ENCODE measurements at regions of chr10 and their contacts with region 1.

Region 1: GRCh38 chr10:117431160-117431559 is 55.9 kb upstream of the PDZD8 start:
- DNase-seq: peak; percentile 17
- H3K4me3 ChIP-seq: no peak overlapping the region
- CTCF ChIP-seq: peak; percentile 54

Region 2: GRCh38 chr10:117442944-117443685 is 12.0 kb after region 1 on chr10:
- CTCF ChIA-PET with region 1: interaction called, 50 read pairs
- POLR2A ChIA-PET with region 1: no interaction called
- DNase-seq: no peak
- H3K4me3 ChIP-seq: peak overlapping the region; percentile 27
- CTCF ChIP-seq: peak; percentile 95

Region 3: DNA sequence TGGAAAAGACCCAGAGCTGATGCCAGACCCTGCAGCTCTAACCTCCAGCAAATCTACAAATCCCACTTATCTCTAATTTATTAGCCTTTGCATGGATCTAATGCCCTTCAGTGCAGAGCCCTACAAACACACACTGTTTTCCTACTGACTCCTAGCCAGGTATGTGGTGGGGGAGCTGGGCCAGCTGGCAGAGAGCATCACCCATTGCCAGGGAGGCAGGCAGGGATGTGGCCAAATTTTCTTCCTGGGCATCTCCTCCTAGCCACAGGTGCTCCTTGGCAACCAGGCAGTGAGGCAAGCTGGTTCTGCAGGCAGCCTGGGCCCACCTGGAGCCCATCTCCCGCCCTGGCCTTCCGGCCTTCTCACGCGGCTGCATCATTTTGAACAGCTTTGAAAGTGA is 55.4 kb after region 1 on chr10:
- CTCF ChIA-PET with region 1: interaction called, 13 read pairs
- POLR2A ChIA-PET with region 1: no interaction called
- DNase-seq: no peak
- H3K4me3 ChIP-seq: no peak overlapping the region
- CTCF ChIP-seq: no peak

Region 4: GRCh38 chr10:118241229-118242137 is 810.3 kb after region 1 on chr10:
- CTCF ChIA-PET with region 1: interaction called, 34 read pairs
- POLR2A ChIA-PET with region 1: no interaction called
- DNase-seq: peak; percentile 40
- H3K4me3 ChIP-seq: no peak overlapping the region
- CTCF ChIP-seq: peak; percentile 83

Region 5: GRCh38 chr10:118459726-118460193 is 1028.6 kb after region 1 on chr10:
- CTCF ChIA-PET with region 1: interaction called, 20 read pairs
- POLR2A ChIA-PET with region 1: no interaction called
- DNase-seq: peak; percentile 4
- H3K4me3 ChIP-seq: no peak overlapping the region
- CTCF ChIP-seq: peak; percentile 72

Measured in AG04449 (cell line).